Body of pancreas (tissue), 4 donors: ENCODE measurements at regions of chr11 and their contacts with region 1.

Region 1: DNA sequence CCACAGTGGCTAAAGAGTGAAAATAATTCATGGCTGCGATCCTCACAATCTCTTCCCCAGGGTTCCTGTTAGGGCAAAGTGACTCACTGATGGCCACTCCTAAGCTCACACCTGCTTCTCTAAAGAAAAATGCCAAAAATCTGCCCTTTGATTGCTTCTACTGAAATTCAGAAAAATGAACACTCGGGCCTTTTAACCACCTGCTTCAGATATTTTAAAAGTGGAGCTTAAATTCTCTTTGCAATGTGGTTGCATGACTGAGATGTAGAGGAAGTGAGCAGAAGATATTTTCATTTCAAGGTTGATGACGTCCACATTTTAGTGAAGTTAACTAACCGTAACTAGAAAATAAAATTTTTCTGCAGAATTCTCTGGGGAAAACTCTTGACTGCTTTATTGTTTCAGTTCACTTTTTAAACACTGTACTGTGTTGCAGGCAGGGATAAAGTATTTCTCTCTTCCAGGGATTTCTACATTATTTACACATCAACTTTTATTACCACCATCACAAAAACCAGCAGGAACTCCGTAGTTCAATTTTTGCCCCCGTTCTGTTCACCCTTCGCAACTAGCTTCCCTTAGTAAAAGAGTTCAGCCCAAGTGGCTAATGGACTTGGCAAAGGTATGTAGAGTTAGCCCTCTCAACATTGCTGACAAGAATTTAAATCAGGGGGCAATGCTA is 8.5 kb downstream of the RAB30 start:
- DNase-seq: no peak
- ATAC-seq: peak; percentile 33
- H3K4me3 ChIP-seq: no peak overlapping the region
- H3K27ac ChIP-seq: no peak overlapping the region
- H3K4me1 ChIP-seq: no peaks in the 10 kb centered on the region
- H3K27me3 ChIP-seq: no peaks in the 10 kb centered on the region
- CTCF ChIP-seq: no peak
- POLR2A ChIP-seq: no peak

Region 2: GRCh38 chr11:83007909-83008580 is 55.2 kb before region 1 on chr11:
- intact Hi-C with region 1: loop called (anchors 10 kb)
- DNase-seq: peak; percentile 61 to 74 (median 70)
- ATAC-seq: peak; percentile 80
- H3K4me3 ChIP-seq: no peak overlapping the region
- H3K27ac ChIP-seq: peak overlapping the region; percentile 34 to 51 (median 46)
- H3K4me1 ChIP-seq: peaks cover 30% of the 10 kb centered on the region
- H3K27me3 ChIP-seq: no peaks in the 10 kb centered on the region
- CTCF ChIP-seq: no peak
- POLR2A ChIP-seq: no peak